Mammary epithelial cell (primary cell): ENCODE measurements at regions of chr2 and their contacts with region 1.

Region 1: DNA sequence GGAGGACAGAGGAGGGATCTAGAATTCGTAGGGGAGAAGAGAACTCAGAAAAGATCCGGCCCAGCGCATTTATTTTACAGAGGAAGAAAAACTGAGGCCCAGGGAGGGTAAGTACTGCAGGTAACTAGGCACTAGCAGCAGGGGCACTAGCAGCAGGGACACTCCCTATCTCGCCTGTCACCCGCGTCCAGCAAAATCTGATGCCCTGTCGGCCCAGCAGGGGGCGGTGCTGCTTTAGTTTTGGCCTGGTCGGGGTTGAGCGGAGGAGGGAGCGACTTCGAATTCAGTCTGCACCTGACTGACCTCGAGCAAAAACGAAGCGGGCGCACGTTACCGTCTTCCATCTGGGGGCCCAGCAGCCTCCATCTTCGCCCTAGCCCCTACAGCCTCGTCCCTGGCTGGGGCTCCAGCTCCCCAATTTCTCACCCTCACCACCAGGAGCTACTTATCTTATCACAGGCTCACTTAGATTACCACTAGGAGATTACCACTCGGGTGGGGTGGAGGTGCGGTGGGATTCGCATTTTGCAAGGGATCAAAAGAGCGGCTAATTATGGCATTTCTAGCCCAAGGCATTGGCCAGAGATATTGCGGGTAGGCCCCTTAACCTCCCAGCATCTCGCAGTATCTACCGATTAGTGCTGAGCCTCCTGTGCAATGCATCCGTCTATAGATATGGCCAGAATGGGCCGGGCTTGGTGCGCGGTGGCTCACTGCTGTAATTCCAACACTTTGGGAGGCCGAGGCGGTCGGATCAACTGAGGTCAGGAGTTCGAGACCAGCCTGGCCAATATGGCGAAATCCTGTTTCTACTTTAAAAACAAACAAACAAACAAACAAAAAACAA is 17.8 kb upstream of the CD8A start:
- DNase-seq: peak; percentile 84
- H3K4me3 ChIP-seq: peak overlapping the region; percentile 60 to 63 (median 62)
- H3K27ac ChIP-seq: peak overlapping the region; percentile 11
- H3K4me1 ChIP-seq: peaks cover 16% of the 10 kb centered on the region
- H3K27me3 ChIP-seq: no peaks in the 10 kb centered on the region
- CTCF ChIP-seq: peak; percentile 88 to 93

Region 2: DNA sequence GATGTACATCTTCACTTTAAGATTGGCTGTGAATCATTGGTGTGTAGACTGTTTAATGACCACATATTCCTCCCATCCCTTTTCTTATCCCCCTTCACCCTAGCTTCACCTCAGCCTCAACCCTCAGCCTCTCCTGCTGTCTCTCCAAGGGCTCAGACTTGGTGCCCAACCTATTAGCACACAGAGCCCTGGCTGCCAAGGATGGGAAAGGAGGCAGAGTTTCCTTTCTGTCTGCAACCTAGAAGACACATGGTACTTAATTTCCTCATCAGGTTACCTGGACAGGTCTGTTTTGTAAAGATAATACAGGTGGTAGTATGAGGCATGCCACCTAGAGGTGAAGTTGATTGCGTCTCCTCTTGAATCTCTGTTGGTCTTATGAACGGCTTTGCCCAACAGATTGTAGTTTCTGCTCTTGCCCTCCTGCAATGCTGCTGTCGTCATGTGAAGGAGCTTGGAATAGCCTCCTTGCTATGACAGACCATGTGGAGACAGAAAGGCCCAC is 133.0 kb before region 1 on chr2:
- CTCF ChIA-PET with region 1: no interaction called
- dilution Hi-C with region 1: no loop called
- in situ Hi-C with region 1: no loop called
- intact Hi-C with region 1: no loop called
- DNase-seq: peak; percentile 20
- H3K4me3 ChIP-seq: no peak overlapping the region
- H3K27ac ChIP-seq: no peak overlapping the region
- H3K4me1 ChIP-seq: no peaks in the 10 kb centered on the region
- H3K27me3 ChIP-seq: no peaks in the 10 kb centered on the region
- CTCF ChIP-seq: peak; percentile 27 to 43

Region 3: GRCh38 chr2:86747711-86748639 is 60.6 kb before region 1 on chr2:
- CTCF ChIA-PET with region 1: no interaction called
- dilution Hi-C with region 1: no loop called
- in situ Hi-C with region 1: no loop called
- intact Hi-C with region 1: loop called (anchors 10 kb)
- DNase-seq: peak; percentile 69
- H3K4me3 ChIP-seq: no peak overlapping the region
- H3K27ac ChIP-seq: peak overlapping the region; percentile 70
- H3K4me1 ChIP-seq: peaks cover 8% of the 10 kb centered on the region
- H3K27me3 ChIP-seq: no peaks in the 10 kb centered on the region
- CTCF ChIP-seq: no peak